ENCODE measurements at regions of chr19 and their contacts with region 1.

Region 1: DNA sequence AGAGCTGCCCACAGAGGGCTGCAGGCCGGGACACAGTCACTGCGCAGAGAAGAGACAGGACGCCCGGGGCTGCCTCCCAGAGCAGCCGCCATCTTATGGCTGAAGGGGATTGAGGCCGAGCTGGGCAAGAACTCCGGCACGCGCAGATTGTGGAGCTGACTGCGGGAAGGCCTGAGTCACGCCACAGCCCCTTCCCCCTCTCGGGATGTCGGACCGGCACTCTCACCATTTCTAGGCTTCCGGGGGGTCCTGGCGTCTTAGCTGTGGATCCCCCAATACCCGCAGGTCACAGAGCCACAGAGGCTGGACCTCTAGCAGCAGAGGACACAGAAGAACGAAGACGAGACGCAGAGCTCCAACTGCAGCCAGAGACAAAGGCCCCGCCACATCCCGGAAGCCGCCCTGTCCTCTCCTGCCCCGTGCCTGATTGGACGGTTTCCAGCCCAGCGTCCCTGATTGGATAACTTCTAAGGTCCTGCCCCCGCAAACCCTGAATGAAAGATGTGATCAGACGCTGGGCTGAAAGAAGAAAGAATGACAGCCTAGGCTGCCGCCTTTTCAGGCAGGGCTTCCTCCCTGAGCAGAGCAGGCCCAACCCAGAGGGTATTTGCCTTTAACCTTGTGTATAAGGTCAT is at the start of gene ZNF43:
- DNase-seq: peak; percentile 96
- ATAC-seq: peak; percentile 97
- H3K4me3 Mint-ChIP-seq: peak within 1 kb of the TSS; percentile 99
- H3K27ac Mint-ChIP-seq: peak within 1 kb of the TSS; percentile 100
- H3K4me1 Mint-ChIP-seq: peaks cover 35% of the 10 kb centered on the region
- H3K27me3 Mint-ChIP-seq: no peaks in the 10 kb centered on the region
- total RNA-seq, gene ZNF43: 31.7 to 38.6 TPM

Region 2: GRCh38 chr19:20077791-20078463 is 1758.0 kb before region 1 on chr19 and contains the start of gene ZNF90:
- CTCF ChIA-PET with region 1: no interaction called
- POLR2A ChIA-PET with region 1: no interaction called
- intact Hi-C with region 1: loop called in 1 of 2 experiments (anchors 5 kb)
- DNase-seq: peak; percentile 96
- ATAC-seq: peak; percentile 100
- H3K4me3 Mint-ChIP-seq: peak within 1 kb of the TSS; percentile 97
- H3K27ac Mint-ChIP-seq: peak within 1 kb of the TSS; percentile 73
- H3K4me1 Mint-ChIP-seq: peaks cover 11% of the 10 kb centered on the region
- H3K27me3 Mint-ChIP-seq: no peaks in the 10 kb centered on the region
- total RNA-seq, gene ZNF90: 21.6 to 22.9 TPM

Region 3: GRCh38 chr19:21568816-21569493 is 267.0 kb before region 1 on chr19:
- CTCF ChIA-PET with region 1: no interaction called
- POLR2A ChIA-PET with region 1: no interaction called
- intact Hi-C with region 1: loop called in 1 of 2 experiments (anchors 1 kb)
- DNase-seq: peak; percentile 92
- ATAC-seq: peak; percentile 97
- H3K4me3 Mint-ChIP-seq: peak overlapping the region; percentile 86
- H3K27ac Mint-ChIP-seq: peak overlapping the region; percentile 100
- H3K4me1 Mint-ChIP-seq: peaks cover 29% of the 10 kb centered on the region
- H3K27me3 Mint-ChIP-seq: no peaks in the 10 kb centered on the region

Region 4: GRCh38 chr19:21617740-21618339 is 218.1 kb before region 1 on chr19:
- CTCF ChIA-PET with region 1: no interaction called
- POLR2A ChIA-PET with region 1: no interaction called
- intact Hi-C with region 1: no loop called
- DNase-seq: no peak
- ATAC-seq: no peak
- H3K4me3 Mint-ChIP-seq: no peak overlapping the region
- H3K27ac Mint-ChIP-seq: no peak overlapping the region
- H3K4me1 Mint-ChIP-seq: no peaks in the 10 kb centered on the region
- H3K27me3 Mint-ChIP-seq: no peaks in the 10 kb centered on the region

Region 5: DNA sequence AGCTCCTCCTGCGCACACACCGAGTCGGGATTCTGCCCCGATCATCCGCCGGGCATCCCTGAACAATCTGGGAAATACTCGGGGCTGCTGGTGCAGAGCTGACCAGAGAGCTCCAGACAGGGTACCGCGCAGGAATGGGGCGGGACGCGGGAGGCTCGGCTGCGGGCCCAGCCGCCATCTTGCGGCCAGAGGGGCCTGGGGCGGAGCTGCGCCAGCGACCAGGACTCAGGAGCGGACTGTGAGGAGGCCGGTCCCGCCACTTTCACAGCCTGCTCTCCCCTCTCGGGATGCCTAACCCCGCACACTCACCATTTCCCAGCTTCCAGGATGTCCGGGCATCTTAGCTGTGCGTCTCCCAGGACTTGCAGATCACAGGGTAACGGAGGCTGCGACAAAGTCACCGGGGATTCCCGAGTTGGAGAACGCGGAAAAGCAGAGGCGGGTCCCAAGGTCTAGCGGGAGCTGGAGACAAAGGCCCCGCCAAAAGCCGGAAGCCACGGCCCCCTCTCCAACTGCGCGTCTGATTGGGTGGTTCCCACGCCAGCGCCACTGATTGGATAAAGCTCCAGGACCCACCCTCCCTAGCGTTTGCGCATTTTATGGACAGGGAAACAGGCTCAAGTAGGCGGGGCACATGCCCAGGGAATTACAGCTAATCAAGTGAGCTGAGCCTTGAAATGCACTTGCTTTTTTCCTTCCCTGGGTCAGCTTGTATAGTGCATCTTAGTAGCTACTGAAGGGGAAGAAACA is 15.8 kb after region 1 on chr19:
- CTCF ChIA-PET with region 1: interaction called, 4 read pairs
- POLR2A ChIA-PET with region 1: interaction called, 23 read pairs
- intact Hi-C with region 1: loop called (anchors 1 kb)
- DNase-seq: peak; percentile 96
- ATAC-seq: peak; percentile 98
- H3K4me3 Mint-ChIP-seq: peak overlapping the region; percentile 88
- H3K27ac Mint-ChIP-seq: peak overlapping the region; percentile 88
- H3K4me1 Mint-ChIP-seq: peaks cover 30% of the 10 kb centered on the region
- H3K27me3 Mint-ChIP-seq: no peaks in the 10 kb centered on the region

Region 6: GRCh38 chr19:21912654-21913053 is 76.7 kb after region 1 on chr19:
- CTCF ChIA-PET with region 1: no interaction called
- POLR2A ChIA-PET with region 1: no interaction called
- intact Hi-C with region 1: no loop called
- DNase-seq: no peak
- ATAC-seq: no peak
- H3K4me3 Mint-ChIP-seq: no peak overlapping the region
- H3K27ac Mint-ChIP-seq: no peak overlapping the region
- H3K4me1 Mint-ChIP-seq: no peaks in the 10 kb centered on the region
- H3K27me3 Mint-ChIP-seq: no peaks in the 10 kb centered on the region

Region 7: DNA sequence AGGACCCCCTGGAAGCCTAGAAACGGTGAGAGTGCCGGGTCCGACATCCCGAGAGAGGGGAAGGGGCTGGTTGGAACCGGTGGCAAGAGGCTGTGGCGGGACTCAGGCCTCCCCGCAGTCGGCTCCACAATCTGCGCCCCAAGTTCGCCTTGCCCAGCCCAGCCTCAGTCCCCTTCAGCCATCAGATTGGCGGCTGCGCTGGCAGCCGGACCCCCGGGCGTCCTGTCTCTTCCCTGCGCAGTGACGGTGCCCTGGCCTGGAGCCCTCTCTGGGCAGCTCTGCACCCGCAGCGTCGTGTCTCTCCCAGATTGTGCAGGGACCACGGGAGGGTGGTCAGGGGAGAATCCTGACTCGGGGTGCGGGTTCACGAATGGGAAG is 798.5 kb after region 1 on chr19:
- CTCF ChIA-PET with region 1: no interaction called
- POLR2A ChIA-PET with region 1: interaction called, 3 read pairs
- intact Hi-C with region 1: loop called in 1 of 2 experiments (anchors 5 kb)
- DNase-seq: peak; percentile 36
- ATAC-seq: peak; percentile 28
- H3K4me3 Mint-ChIP-seq: peak overlapping the region; percentile 93
- H3K27ac Mint-ChIP-seq: peak overlapping the region; percentile 94
- H3K4me1 Mint-ChIP-seq: peaks cover 6% of the 10 kb centered on the region
- H3K27me3 Mint-ChIP-seq: no peaks in the 10 kb centered on the region

Region 8: GRCh38 chr19:23686621-23687423 is 1850.9 kb after region 1 on chr19 and contains the start of gene ZNF675:
- CTCF ChIA-PET with region 1: no interaction called
- POLR2A ChIA-PET with region 1: no interaction called
- intact Hi-C with region 1: loop called in 1 of 2 experiments (anchors 5 kb)
- DNase-seq: peak; percentile 95
- ATAC-seq: peak; percentile 97
- H3K4me3 Mint-ChIP-seq: peak within 1 kb of the TSS; percentile 98
- H3K27ac Mint-ChIP-seq: peak within 1 kb of the TSS; percentile 98
- H3K4me1 Mint-ChIP-seq: peaks cover 41% of the 10 kb centered on the region
- H3K27me3 Mint-ChIP-seq: no peaks in the 10 kb centered on the region
- total RNA-seq, gene ZNF675: 19.1 to 22.8 TPM